B cell (primary cell): ENCODE measurements at regions of chr13 and their contacts with region 1.

Region 1: GRCh38 chr13:26985285-26985878 is 186.2 kb downstream of the USP12 start:
- DNase-seq: peak; percentile 84
- ATAC-seq: peak; percentile 94
- H3K4me3 ChIP-seq: no peak overlapping the region
- H3K4me3 Mint-ChIP-seq: no peak overlapping the region
- H3K27ac ChIP-seq: no peak overlapping the region
- H3K27ac Mint-ChIP-seq: no peak overlapping the region
- H3K4me1 ChIP-seq: peaks cover 0 to 5% of the 10 kb centered on the region in 2 donors
- H3K4me1 Mint-ChIP-seq: peaks cover 4% of the 10 kb centered on the region
- H3K27me3 ChIP-seq: peaks cover 0 to 10% (median 0%) of the 10 kb centered on the region in 4 experiments
- H3K27me3 Mint-ChIP-seq: peaks cover 3% of the 10 kb centered on the region
- CTCF ChIP-seq: peak; percentile 84

Region 2: GRCh38 chr13:26996965-26997752 is 11.8 kb after region 1 on chr13:
- CTCF ChIA-PET with region 1: interaction called, 29 read pairs
- POLR2A ChIA-PET with region 1: no interaction called
- intact Hi-C with region 1: no loop called
- DNase-seq: peak; percentile 43
- ATAC-seq: peak; percentile 85
- H3K4me3 ChIP-seq: peak overlapping the region in 3 of 5 experiments; percentile 28 to 45 (median 29)
- H3K4me3 Mint-ChIP-seq: peak overlapping the region; percentile 77
- H3K27ac ChIP-seq: peak overlapping the region in 1 of 2 donors; percentile 48
- H3K27ac Mint-ChIP-seq: peak overlapping the region; percentile 42
- H3K4me1 ChIP-seq: peaks cover 37 to 45% of the 10 kb centered on the region in 2 donors
- H3K4me1 Mint-ChIP-seq: peaks cover 62% of the 10 kb centered on the region
- H3K27me3 ChIP-seq: no peaks in the 10 kb centered on the region
- H3K27me3 Mint-ChIP-seq: no peaks in the 10 kb centered on the region
- CTCF ChIP-seq: no peak

Region 3: DNA sequence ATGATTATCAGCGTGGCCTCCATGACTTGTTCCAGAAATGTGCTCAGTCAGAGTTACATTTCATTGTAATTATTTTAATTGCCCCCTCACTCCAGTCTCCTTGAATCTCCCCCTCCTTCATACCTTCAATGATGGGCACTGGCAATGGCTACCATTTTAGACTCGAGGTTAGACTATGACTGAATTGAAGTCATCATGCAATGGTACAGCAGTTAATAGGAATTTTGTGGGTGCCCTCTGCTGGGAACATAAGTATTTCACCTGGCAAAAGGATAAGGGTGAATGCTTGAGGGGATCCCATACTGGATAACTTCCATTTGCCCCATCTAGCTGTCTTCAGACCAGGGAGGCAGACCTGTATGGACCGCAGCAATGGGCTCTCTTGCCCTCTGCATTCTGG is 218.5 kb after region 1 on chr13:
- CTCF ChIA-PET with region 1: interaction called, 11 read pairs
- POLR2A ChIA-PET with region 1: no interaction called
- intact Hi-C with region 1: loop called (anchors 5 kb)
- DNase-seq: no peak
- ATAC-seq: no peak
- H3K4me3 ChIP-seq: no peak overlapping the region
- H3K4me3 Mint-ChIP-seq: no peak overlapping the region
- H3K27ac ChIP-seq: no peak overlapping the region
- H3K27ac Mint-ChIP-seq: no peak overlapping the region
- H3K4me1 ChIP-seq: no peaks in the 10 kb centered on the region
- H3K4me1 Mint-ChIP-seq: no peaks in the 10 kb centered on the region
- H3K27me3 ChIP-seq: peaks cover 0 to 5% (median 0%) of the 10 kb centered on the region in 4 experiments
- H3K27me3 Mint-ChIP-seq: no peaks in the 10 kb centered on the region
- CTCF ChIP-seq: no peak

Region 4: GRCh38 chr13:27339299-27339698 is 353.9 kb after region 1 on chr13:
- CTCF ChIA-PET with region 1: interaction called, 16 read pairs
- POLR2A ChIA-PET with region 1: no interaction called
- intact Hi-C with region 1: no loop called
- DNase-seq: peak; percentile 57
- ATAC-seq: peak; percentile 62
- H3K4me3 ChIP-seq: no peak overlapping the region
- H3K4me3 Mint-ChIP-seq: no peak overlapping the region
- H3K27ac ChIP-seq: no peak overlapping the region
- H3K27ac Mint-ChIP-seq: no peak overlapping the region
- H3K4me1 ChIP-seq: peaks cover 0 to 6% of the 10 kb centered on the region in 2 donors
- H3K4me1 Mint-ChIP-seq: no peaks in the 10 kb centered on the region
- H3K27me3 ChIP-seq: peaks cover 0 to 5% (median 1%) of the 10 kb centered on the region in 4 experiments
- H3K27me3 Mint-ChIP-seq: no peaks in the 10 kb centered on the region
- CTCF ChIP-seq: peak; percentile 68

Region 5: DNA sequence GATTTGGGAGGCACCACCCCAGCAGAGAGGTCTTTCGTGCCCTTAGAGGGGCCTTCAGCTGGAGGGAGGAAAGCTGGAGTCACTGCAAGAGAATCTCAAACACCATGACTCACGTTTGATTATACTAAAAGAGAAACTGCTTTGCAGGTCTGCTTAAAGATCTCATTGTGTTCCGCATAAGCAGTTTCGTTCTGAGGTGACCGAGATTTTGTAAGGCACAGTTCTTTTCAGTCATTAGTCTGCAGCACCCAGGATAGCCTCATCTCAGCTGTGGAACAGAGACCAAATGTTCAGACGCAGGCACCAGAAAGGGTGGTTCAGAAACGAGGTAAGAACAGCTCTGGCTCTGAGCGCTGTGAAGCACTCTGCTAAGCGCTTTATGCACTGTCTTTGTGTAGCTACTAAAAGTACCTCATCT is 367.8 kb after region 1 on chr13:
- CTCF ChIA-PET with region 1: interaction called, 323 read pairs
- POLR2A ChIA-PET with region 1: interaction called, 3 read pairs
- intact Hi-C with region 1: no loop called
- DNase-seq: peak; percentile 50
- ATAC-seq: peak; percentile 89
- H3K4me3 ChIP-seq: peak overlapping the region in 2 of 5 experiments; percentile 22 to 29
- H3K4me3 Mint-ChIP-seq: peak overlapping the region; percentile 76
- H3K27ac ChIP-seq: peak overlapping the region in 1 of 2 donors; percentile 10
- H3K27ac Mint-ChIP-seq: peak overlapping the region; percentile 71
- H3K4me1 ChIP-seq: peaks cover 4 to 14% of the 10 kb centered on the region in 2 donors
- H3K4me1 Mint-ChIP-seq: peaks cover 17% of the 10 kb centered on the region
- H3K27me3 ChIP-seq: peaks cover 0 to 3% (median 0%) of the 10 kb centered on the region in 4 experiments
- H3K27me3 Mint-ChIP-seq: peaks cover 6% of the 10 kb centered on the region
- CTCF ChIP-seq: no peak

Region 6: GRCh38 chr13:27374650-27375049 is 389.3 kb after region 1 on chr13:
- CTCF ChIA-PET with region 1: interaction called, 10 read pairs
- POLR2A ChIA-PET with region 1: no interaction called
- intact Hi-C with region 1: no loop called
- DNase-seq: peak; percentile 77
- ATAC-seq: peak; percentile 85
- H3K4me3 ChIP-seq: no peak overlapping the region
- H3K4me3 Mint-ChIP-seq: no peak overlapping the region
- H3K27ac ChIP-seq: no peak overlapping the region
- H3K27ac Mint-ChIP-seq: no peak overlapping the region
- H3K4me1 ChIP-seq: no peaks in the 10 kb centered on the region
- H3K4me1 Mint-ChIP-seq: peaks cover 2% of the 10 kb centered on the region
- H3K27me3 ChIP-seq: peaks cover 0 to 7% (median 0%) of the 10 kb centered on the region in 4 experiments
- H3K27me3 Mint-ChIP-seq: peaks cover 34% of the 10 kb centered on the region
- CTCF ChIP-seq: peak; percentile 82

Region 7: DNA sequence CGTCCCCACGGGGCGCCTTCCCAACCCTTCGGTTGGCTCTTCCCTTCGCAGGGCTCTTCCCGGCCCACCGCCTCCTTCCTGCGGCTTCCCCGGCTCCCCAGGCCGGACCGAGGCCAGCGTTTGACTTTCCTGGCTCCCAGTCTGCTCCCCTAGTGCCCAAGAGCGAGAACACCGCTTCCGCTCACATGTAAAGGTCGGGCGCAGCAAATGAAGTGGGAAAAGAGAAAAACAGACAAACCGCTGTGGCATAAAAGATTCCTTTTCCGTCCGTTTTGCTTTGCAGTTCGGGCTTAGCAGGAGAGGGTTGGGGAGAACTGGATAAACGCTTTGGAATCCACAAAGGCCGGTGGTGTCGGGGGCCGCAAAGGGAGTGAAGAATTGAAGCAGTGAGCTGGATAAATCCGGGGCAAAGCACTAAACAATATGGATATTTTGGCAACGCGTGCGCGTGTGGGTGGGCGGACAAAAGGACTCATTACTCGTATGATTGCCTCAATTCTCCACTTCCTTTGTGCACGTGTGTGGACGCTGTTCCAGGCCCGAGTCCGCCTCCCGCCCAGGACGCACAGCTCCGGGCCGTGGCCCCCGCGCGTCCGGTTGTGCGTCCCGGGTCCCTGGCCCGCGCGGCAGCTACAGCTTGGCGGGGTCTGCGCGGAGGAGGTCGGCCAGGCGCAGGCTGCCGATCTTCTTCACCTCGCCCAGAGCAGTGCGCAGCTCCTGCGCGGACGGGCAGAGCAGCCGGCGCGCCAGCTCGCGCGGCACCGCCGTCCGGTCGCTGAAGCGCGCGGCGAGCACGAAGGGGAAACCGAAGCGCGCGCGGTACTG is 992.3 kb after region 1 on chr13:
- CTCF ChIA-PET with region 1: interaction called, 19 read pairs
- POLR2A ChIA-PET with region 1: no interaction called
- intact Hi-C with region 1: no loop called
- DNase-seq: peak; percentile 54
- ATAC-seq: no peak
- H3K4me3 ChIP-seq: no peak overlapping the region
- H3K4me3 Mint-ChIP-seq: peak overlapping the region; percentile 64
- H3K27ac ChIP-seq: no peak overlapping the region
- H3K27ac Mint-ChIP-seq: no peak overlapping the region
- H3K4me1 ChIP-seq: peaks cover 46 to 51% of the 10 kb centered on the region in 2 donors
- H3K4me1 Mint-ChIP-seq: peaks cover 39% of the 10 kb centered on the region
- H3K27me3 ChIP-seq: peaks cover 0 to 86% (median 66%) of the 10 kb centered on the region in 4 experiments
- H3K27me3 Mint-ChIP-seq: peaks cover 79% of the 10 kb centered on the region
- CTCF ChIP-seq: no peak